Colonic mucosa (tissue), 4 donors: ENCODE measurements at regions of chr10 and their contacts with region 1.

Region 1: DNA sequence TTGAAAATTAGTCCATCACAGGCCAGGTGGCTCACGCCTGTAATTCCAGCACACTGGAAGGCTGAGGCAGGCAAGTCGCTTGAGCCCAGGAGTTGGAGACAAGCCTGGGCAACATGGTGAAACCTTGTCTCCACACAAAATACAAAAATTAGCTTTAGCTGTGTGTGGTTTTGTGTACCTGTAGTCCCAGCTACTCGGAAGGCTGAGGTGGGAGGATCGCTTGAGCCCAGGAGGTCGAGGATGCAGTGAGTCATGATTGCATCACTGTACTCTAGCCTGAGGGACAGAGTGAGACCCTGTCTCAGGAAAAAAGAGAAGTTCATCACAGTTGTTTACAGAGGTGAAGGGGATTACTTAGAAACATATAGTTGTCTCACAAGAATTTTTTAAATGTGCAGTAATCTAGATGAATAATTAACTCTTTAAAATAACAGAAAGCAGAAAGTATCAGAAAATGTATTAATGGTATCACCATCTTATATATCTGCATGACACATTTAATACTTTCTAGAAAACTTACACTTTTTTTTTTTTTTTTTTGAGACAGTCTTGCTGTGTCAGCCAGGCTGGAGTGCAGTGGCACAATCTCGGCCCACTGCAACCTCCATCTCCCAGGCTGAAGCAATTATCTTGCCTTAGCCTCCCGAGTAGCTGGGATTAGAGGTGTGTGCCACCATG is 8.9 kb downstream of the LCOR start:
- DNase-seq: no peak
- H3K4me3 ChIP-seq: no peak overlapping the region
- H3K27ac ChIP-seq: no peak overlapping the region
- H3K4me1 ChIP-seq: no peaks in the 10 kb centered on the region
- H3K27me3 ChIP-seq: no peaks in the 10 kb centered on the region
- CTCF ChIP-seq: no peak

Region 2: DNA sequence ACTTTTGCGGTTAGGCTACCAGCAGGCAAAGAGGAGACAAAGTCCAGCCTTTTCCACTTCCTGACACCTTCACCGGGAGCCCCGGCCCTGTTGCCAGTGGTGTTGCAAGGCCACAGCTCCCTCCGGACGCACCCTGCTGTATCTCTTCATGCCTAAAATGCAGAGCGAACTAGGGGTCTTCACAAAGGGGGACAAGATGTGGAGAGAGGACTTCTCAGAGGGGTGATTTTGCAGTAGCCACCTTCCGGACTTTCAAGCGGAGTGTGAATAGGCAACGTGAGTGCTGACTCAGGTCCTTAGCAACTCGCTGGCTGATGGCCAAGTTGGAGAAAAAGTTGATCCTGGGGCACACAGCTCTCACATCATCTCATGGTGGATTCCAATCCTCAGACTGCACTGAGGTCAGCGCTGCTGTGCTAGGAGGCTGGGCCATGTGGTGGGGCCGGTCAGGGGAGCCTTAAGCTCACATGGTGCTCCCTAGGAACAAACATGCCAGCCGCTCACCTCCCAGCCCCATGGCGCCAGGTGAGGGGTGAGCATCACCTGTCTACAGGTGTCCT is 157.4 kb after region 1 on chr10:
- intact Hi-C with region 1: no loop called
- DNase-seq: no peak
- H3K4me3 ChIP-seq: no peak overlapping the region
- H3K27ac ChIP-seq: no peak overlapping the region
- H3K4me1 ChIP-seq: no peaks in the 10 kb centered on the region
- H3K27me3 ChIP-seq: no peaks in the 10 kb centered on the region
- CTCF ChIP-seq: no peak

Region 3: DNA sequence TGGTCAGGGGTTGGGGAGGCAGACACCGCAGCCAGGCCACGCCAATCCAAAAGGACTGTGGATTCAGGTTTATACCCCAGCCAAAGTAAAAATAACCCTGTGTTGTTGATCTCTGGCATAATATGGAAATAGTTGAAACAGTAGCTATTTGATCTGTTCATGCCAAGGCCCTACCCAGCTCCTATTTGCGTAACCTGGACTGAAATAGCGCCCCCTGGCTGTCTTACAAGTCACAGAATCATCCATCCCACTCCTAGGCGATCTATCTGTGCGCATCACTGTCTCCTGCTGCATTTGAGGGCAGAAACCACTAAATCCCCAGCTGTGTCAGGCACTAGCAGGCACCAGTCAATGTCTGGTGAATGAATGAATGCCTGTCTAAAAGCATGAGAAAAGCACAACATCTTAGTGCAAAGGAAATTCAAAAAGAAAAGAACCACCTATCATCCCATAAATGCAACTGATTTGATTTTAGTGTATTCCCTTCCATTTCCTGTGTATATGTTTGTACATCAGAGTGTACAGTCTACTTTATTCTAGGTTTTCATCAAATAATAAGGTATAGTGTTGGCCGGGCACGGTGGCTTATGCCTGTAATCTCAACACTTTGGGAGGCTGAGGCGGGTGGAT is 184.7 kb after region 1 on chr10:
- intact Hi-C with region 1: loop called (anchors 10 kb)
- DNase-seq: peak; percentile 64
- H3K4me3 ChIP-seq: no peak overlapping the region
- H3K27ac ChIP-seq: no peak overlapping the region
- H3K4me1 ChIP-seq: no peaks in the 10 kb centered on the region
- H3K27me3 ChIP-seq: no peaks in the 10 kb centered on the region
- CTCF ChIP-seq: peak; percentile 76